T-cell (primary cell): ENCODE measurements at regions of chr7 and their contacts with region 1.

Region 1: GRCh38 chr7:2146676-2147472 is 85.9 kb downstream of the MAD1L1 start:
- DNase-seq: no peak
- ATAC-seq: no peak
- H3K4me3 ChIP-seq: no peak overlapping the region
- H3K4me3 Mint-ChIP-seq: no peak overlapping the region
- H3K27ac ChIP-seq: no peak overlapping the region
- H3K27ac Mint-ChIP-seq: no peak overlapping the region
- H3K4me1 ChIP-seq: no peaks in the 10 kb centered on the region
- H3K4me1 Mint-ChIP-seq: no peaks in the 10 kb centered on the region
- H3K27me3 ChIP-seq: no peaks in the 10 kb centered on the region
- H3K27me3 Mint-ChIP-seq: no peaks in the 10 kb centered on the region

Region 2: GRCh38 chr7:2399848-2400587 is 253.1 kb after region 1 on chr7:
- CTCF ChIA-PET with region 1: interaction called in 1 of 2 experiments, 10 read pairs
- POLR2A ChIA-PET with region 1: no interaction called
- DNase-seq: peak in 1 of 35 experiments; percentile 28
- ATAC-seq: no peak
- H3K4me3 ChIP-seq: no peak overlapping the region
- H3K4me3 Mint-ChIP-seq: peak overlapping the region in 1 of 3 donors; percentile 26
- H3K27ac ChIP-seq: peak overlapping the region; percentile 25
- H3K27ac Mint-ChIP-seq: peak overlapping the region; percentile 82 to 87
- H3K4me1 ChIP-seq: peaks cover 0 to 39% of the 10 kb centered on the region in 2 experiments
- H3K4me1 Mint-ChIP-seq: peaks cover 24 to 32% (median 27%) of the 10 kb centered on the region in 3 donors
- H3K27me3 ChIP-seq: no peaks in the 10 kb centered on the region
- H3K27me3 Mint-ChIP-seq: no peaks in the 10 kb centered on the region